ENCODE measurements at regions of chr3 and their contacts with region 1.

Region 1: GRCh38 chr3:78645628-78646310 is 1122.0 kb downstream of the ROBO1 start:
- DNase-seq: no peak
- ATAC-seq: peak in 1 of 4 donors; percentile 39
- H3K4me3 ChIP-seq: no peak overlapping the region
- H3K27ac ChIP-seq: no peak overlapping the region
- H3K4me1 ChIP-seq: peaks cover 0 to 10% (median 0%) of the 10 kb centered on the region in 12 donors
- H3K27me3 ChIP-seq: no peaks in the 10 kb centered on the region
- CTCF ChIP-seq: peak; percentile 72 to 93 (median 80)
- POLR2A ChIP-seq: no peak

Region 2: DNA sequence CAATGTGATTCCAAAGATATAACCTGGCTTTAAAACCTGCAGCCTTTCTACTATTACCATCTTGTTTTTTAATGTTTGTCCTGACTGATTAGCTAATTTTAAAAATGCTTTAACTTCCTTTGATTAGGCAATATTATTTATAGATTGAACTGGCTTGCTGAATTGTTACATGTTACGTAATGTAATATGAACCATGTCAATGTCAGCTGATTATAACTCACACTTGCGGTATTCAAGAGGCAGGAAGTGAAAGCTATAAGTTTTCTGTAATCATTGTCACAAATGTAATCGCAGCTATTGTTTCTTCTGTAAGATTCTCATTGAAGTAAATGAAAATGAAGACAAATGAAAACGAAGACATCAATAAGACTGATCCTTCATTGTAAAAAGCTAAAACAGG is 1459.0 kb before region 1 on chr3:
- intact Hi-C with region 1: loop called in 1 of 10 experiments (anchors 10 kb)
- DNase-seq: no peak
- ATAC-seq: no peak
- H3K4me3 ChIP-seq: peak overlapping the region in 1 of 12 donors; percentile 3
- H3K27ac ChIP-seq: no peak overlapping the region
- H3K4me1 ChIP-seq: peaks cover 0 to 21% (median 0%) of the 10 kb centered on the region in 12 donors
- H3K27me3 ChIP-seq: no peaks in the 10 kb centered on the region
- CTCF ChIP-seq: no peak
- POLR2A ChIP-seq: no peak

Region 3: DNA sequence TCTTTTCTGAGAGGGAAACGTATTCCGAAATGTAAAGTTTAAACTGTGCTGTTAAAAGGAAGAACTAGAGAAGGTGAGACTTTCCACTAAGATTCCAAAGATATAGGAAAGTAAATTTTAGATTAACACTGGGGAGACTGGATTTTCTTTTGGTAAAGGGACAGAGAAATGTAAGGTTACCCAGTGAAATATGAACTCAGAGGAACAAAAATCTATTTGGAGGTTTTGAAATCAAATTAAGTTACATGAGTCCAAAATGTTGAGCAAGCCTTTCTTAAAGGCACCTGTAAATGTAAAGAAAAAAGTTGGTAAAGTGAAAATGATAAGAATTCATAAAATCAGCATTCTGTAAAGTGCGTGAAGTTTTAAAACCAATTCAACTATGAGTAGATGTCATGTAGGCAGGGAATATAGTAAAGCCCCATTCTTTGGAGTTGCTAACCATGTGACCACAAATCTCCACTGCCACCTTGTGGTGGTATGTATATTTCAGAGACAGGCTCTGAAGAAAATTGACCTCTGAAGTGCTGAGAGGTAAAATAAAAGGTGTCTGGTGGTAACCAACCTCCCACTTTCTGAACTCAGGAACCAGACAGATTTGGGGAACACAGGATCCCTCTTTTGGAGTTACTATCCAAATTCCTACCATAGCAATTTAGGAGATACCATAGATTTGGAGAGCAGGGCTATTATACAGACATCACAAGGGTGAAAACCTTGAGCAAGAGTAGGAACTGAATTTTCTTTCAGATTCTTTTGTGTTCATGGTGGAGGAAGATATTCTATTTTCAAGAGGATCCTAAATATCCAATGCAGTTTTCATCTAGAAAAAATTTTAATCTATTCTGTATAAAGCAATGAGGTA is 1390.6 kb before region 1 on chr3:
- intact Hi-C with region 1: loop called in 1 of 10 experiments (anchors 10 kb)
- DNase-seq: no peak
- ATAC-seq: peak in 3 of 4 donors; percentile 49 to 77 (median 53)
- H3K4me3 ChIP-seq: no peak overlapping the region
- H3K27ac ChIP-seq: no peak overlapping the region
- H3K4me1 ChIP-seq: no peaks in the 10 kb centered on the region
- H3K27me3 ChIP-seq: no peaks in the 10 kb centered on the region
- CTCF ChIP-seq: peak; percentile 40 to 75 (median 60)
- POLR2A ChIP-seq: no peak

Measured in heart left ventricle (tissue), 16 donors.